OCI-LY7 (cell line): ENCODE measurements at regions of chr1 and their contacts with region 1.

Region 1: GRCh38 chr1:35564037-35564883 is 6.7 kb downstream of the NCDN start:
- DNase-seq: peak; percentile 85
- H3K4me3 ChIP-seq: no peak overlapping the region
- H3K27ac ChIP-seq: no peak overlapping the region
- H3K4me1 ChIP-seq: no peaks in the 10 kb centered on the region
- CTCF ChIP-seq: peak; percentile 87

Region 2: DNA sequence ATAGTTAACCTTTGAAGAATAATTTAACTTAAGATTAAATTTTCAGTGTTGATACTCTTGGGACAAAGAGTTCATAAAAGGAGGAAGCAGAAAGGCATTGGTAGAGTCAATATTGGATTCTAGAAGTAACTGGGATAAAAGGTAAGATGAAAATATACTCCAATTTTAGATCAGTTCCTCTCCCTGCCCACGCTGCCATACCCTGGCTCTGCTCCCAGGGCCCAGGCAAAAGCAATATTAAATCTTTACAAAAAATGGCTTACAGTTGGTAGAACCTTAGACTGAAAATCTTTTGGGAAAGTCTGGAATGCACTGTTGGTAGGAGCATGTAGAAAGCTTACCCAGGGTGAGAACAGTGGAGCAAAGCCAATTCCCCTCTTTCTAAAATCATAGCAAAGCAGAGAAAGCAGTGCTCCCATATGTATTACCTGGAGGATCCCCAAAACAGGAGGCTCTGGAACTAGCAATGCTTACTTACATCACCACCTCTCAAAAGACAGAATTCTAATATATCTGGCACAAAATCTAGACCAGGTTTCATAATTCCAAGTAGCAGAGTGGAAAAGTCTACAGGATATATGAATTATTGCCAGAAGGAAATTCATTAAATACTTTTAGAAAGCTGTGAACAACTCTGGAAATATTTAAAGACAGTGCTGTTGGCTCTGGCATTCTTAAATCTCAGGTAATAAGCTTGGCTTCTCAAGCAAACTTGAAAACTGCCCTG is 31.6 kb before region 1 on chr1:
- CTCF ChIA-PET with region 1: no interaction called
- POLR2A ChIA-PET with region 1: no interaction called
- intact Hi-C with region 1: no loop called
- DNase-seq: no peak
- H3K4me3 ChIP-seq: no peak overlapping the region
- H3K27ac ChIP-seq: no peak overlapping the region
- H3K4me1 ChIP-seq: no peaks in the 10 kb centered on the region
- CTCF ChIP-seq: no peak

Region 3: DNA sequence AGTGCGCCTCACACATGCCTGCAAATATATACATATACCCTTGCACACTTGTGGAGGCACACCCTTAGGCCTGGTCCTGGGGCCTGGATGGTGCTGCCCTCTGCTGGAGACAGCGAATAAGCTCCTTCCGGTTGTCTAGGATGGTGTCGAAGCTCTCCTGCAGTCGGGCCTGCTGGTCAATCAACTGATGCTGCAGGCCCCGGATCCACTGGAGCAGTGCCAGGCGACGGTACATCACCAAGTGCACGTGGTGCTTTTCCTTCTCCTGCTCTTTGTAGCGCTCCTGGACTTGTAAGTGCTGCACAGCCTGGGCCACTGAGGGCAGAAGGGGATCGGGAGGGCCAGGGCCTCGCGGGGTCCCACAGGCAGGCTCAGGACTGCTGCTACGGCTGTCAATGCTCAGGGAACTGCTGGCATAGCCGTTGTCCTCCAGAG is 151.3 kb after region 1 on chr1:
- CTCF ChIA-PET with region 1: interaction called, 3 read pairs
- POLR2A ChIA-PET with region 1: no interaction called
- intact Hi-C with region 1: loop called (anchors 1 kb)
- DNase-seq: peak; percentile 70
- H3K4me3 ChIP-seq: no peak overlapping the region
- H3K27ac ChIP-seq: no peak overlapping the region
- H3K4me1 ChIP-seq: no peaks in the 10 kb centered on the region
- CTCF ChIP-seq: peak; percentile 92

Region 4: GRCh38 chr1:36099681-36100341 is 535.6 kb after region 1 on chr1:
- CTCF ChIA-PET with region 1: no interaction called
- POLR2A ChIA-PET with region 1: no interaction called
- intact Hi-C with region 1: no loop called
- DNase-seq: peak; percentile 77
- H3K4me3 ChIP-seq: no peak overlapping the region
- H3K27ac ChIP-seq: no peak overlapping the region
- H3K4me1 ChIP-seq: no peaks in the 10 kb centered on the region
- CTCF ChIP-seq: peak; percentile 96